ENCODE measurements at regions of chr3 and their contacts with region 1.

Region 1: DNA sequence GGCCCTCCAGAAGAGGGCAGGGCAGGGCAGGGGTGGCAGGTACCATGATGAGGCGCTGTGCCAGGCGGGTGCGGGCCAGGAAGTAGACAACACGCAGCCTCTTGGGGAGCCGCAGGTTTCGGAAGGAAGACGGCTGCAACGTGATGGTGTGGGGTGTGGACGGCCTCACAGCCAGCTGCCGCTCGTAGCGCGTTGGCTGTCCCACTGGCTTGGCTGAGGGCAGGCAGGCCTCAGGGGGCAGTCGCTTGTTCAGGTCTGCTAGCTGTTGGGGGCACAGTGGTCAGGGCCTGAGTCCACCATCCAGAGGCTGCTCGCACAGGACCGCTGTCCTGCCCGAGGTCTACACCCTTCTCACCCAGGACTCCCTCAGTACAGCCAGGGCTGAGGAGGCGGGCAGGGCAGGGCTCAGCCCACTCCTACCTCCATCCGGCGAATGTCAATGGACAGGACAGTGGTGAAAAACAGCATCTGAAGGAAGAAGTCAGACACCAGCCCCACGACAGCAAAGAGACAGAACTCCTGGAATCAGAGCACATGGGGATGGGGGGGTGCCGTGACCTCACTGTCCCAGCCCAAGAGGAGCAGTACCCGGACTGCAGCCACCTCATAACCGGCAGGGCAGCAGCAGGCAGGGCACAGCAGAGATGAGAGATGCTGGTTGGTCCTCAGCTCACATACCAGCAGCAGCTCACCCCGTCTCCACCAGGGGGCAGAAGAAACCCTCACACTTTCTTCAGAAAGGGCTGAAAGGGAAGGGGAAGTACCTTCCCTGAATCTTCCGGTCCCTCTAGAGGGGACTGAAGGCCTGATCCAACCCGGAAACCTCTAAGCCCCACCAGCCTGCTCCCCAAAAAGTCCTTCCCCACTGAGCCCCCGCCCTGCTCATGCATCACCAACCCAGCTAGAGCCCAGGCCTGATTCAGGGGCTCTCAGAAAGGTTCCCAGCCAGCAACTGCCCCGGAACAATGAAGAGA is 40.0 kb downstream of the PTPN23 start:
- DNase-seq: peak; percentile 84 to 91
- H3K4me3 ChIP-seq: no peak overlapping the region
- H3K4me3 Mint-ChIP-seq: no peak overlapping the region
- H3K27ac Mint-ChIP-seq: peak overlapping the region; percentile 45
- H3K4me1 ChIP-seq: peaks cover 8% of the 10 kb centered on the region
- H3K4me1 Mint-ChIP-seq: peaks cover 17% of the 10 kb centered on the region
- H3K27me3 ChIP-seq: no peaks in the 10 kb centered on the region
- H3K27me3 Mint-ChIP-seq: no peaks in the 10 kb centered on the region
- CTCF ChIP-seq: peak; percentile 87 to 96

Region 2: DNA sequence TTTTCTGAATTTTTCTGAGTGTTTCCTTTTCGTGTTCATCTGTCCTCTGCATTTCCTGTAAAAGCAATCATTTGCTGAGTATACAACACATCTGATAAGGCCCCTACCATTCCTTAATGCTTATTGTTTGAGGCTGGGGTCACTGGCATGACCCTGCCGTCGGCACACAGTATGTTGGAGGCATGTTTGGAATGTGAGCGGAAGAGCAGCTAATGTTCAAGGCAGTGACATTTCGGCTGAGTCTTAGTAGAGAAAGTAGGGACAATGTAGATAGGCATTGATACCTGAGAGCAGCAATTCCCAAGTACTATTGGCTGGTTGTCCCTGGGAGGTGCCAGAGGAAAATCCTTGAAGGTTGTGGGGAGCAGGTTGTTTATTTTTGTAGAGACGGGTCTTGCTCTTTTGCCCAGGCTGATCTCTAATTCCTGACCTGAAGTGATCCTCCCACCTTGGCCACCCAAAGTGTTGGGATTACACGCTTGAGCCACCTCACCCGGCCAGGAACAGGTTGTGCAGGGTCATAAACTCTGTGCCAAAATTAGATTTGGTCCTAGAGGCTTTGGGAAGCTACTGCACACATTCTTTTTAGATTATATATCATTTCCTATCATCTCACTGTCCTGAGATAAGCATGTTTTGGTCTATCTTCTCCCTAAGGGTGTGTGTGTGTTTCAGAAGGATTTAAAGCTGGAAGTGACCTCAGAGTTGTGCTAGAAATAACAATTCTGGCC is 26.5 kb before region 1 on chr3:
- CTCF ChIA-PET with region 1: interaction called, 13 read pairs
- POLR2A ChIA-PET with region 1: interaction called, 3 read pairs
- intact Hi-C with region 1: no loop called
- DNase-seq: peak; percentile 82 to 87
- H3K4me3 ChIP-seq: peak overlapping the region; percentile 5; the same call in 1 of the 2 replicates
- H3K4me3 Mint-ChIP-seq: peak overlapping the region; percentile 69
- H3K27ac Mint-ChIP-seq: peak overlapping the region; percentile 90
- H3K4me1 ChIP-seq: peaks cover 33% of the 10 kb centered on the region
- H3K4me1 Mint-ChIP-seq: peaks cover 17% of the 10 kb centered on the region
- H3K27me3 ChIP-seq: no peaks in the 10 kb centered on the region
- H3K27me3 Mint-ChIP-seq: no peaks in the 10 kb centered on the region
- CTCF ChIP-seq: peak in 1 of 2 experiments; percentile 42

Region 3: DNA sequence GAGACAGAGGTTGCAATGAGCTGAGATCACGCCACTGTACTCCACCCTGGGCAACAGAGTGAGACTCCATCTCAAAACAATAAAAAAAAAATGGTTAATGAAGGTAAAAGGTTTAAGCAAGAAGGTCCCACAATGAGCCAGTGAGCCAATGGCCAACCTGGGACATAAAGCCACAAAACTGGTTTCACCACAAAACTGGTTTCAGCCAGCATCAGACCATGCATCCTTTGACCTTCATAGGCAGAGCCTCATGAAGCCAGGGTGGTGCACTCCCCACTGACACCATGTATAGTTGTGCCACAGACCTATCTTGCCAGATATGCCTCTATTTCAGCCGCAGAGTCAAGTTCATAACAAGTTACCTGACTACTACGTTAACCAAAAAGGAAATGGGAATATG is 13.0 kb after region 1 on chr3:
- CTCF ChIA-PET with region 1: interaction called, 13 read pairs
- POLR2A ChIA-PET with region 1: no interaction called
- intact Hi-C with region 1: no loop called
- DNase-seq: peak in 1 of 2 experiments; percentile 54
- H3K4me3 ChIP-seq: no peak overlapping the region
- H3K4me3 Mint-ChIP-seq: peak overlapping the region; percentile 18
- H3K27ac Mint-ChIP-seq: peak overlapping the region; percentile 22
- H3K4me1 ChIP-seq: peaks cover 30% of the 10 kb centered on the region
- H3K4me1 Mint-ChIP-seq: peaks cover 32% of the 10 kb centered on the region
- H3K27me3 ChIP-seq: no peaks in the 10 kb centered on the region
- H3K27me3 Mint-ChIP-seq: no peaks in the 10 kb centered on the region
- CTCF ChIP-seq: no peak

Region 4: GRCh38 chr3:47443611-47443995 is 22.8 kb after region 1 on chr3:
- CTCF ChIA-PET with region 1: interaction called, 5 read pairs
- POLR2A ChIA-PET with region 1: no interaction called
- intact Hi-C with region 1: loop called (anchors 1 kb)
- DNase-seq: peak; percentile 72 to 79
- H3K4me3 ChIP-seq: 0 out of 2 replicates have a peak overlapping the region, but pooled peaks have one; percentile 5
- H3K4me3 Mint-ChIP-seq: peak overlapping the region; percentile 55
- H3K27ac Mint-ChIP-seq: peak overlapping the region; percentile 70
- H3K4me1 ChIP-seq: peaks cover 37% of the 10 kb centered on the region
- H3K4me1 Mint-ChIP-seq: peaks cover 32% of the 10 kb centered on the region
- H3K27me3 ChIP-seq: no peaks in the 10 kb centered on the region; the same call in 1 of the 2 replicates
- H3K27me3 Mint-ChIP-seq: no peaks in the 10 kb centered on the region
- CTCF ChIP-seq: no peak

Region 5: GRCh38 chr3:47475570-47476329 is 55.0 kb after region 1 on chr3 and contains the start of gene SCAP:
- CTCF ChIA-PET with region 1: interaction called, 42 read pairs
- POLR2A ChIA-PET with region 1: no interaction called
- intact Hi-C with region 1: loop called (anchors 1 kb)
- DNase-seq: peak; percentile 94 to 95
- H3K4me3 ChIP-seq: peak within 1 kb of the TSS; percentile 74
- H3K4me3 Mint-ChIP-seq: peak within 1 kb of the TSS; percentile 89
- H3K27ac Mint-ChIP-seq: peak within 1 kb of the TSS; percentile 82
- H3K4me1 ChIP-seq: peaks cover 12% of the 10 kb centered on the region
- H3K4me1 Mint-ChIP-seq: peaks cover 11% of the 10 kb centered on the region
- H3K27me3 ChIP-seq: no peaks in the 10 kb centered on the region
- H3K27me3 Mint-ChIP-seq: no peaks in the 10 kb centered on the region
- CTCF ChIP-seq: peak; percentile 80 to 84
- total RNA-seq, gene SCAP: 104 and 115 TPM in 2 replicates

Region 6: GRCh38 chr3:47513125-47513929 is 92.5 kb after region 1 on chr3 and contains the start of gene ELP6:
- CTCF ChIA-PET with region 1: interaction called, 5 read pairs
- POLR2A ChIA-PET with region 1: no interaction called
- intact Hi-C with region 1: loop called (anchors 1 kb)
- DNase-seq: peak; percentile 97
- H3K4me3 ChIP-seq: peak within 1 kb of the TSS; percentile 49
- H3K4me3 Mint-ChIP-seq: peak within 1 kb of the TSS; percentile 89
- H3K27ac Mint-ChIP-seq: peak within 1 kb of the TSS; percentile 94
- H3K4me1 ChIP-seq: no peaks in the 10 kb centered on the region
- H3K4me1 Mint-ChIP-seq: peaks cover 6% of the 10 kb centered on the region
- H3K27me3 ChIP-seq: no peaks in the 10 kb centered on the region
- H3K27me3 Mint-ChIP-seq: no peaks in the 10 kb centered on the region
- CTCF ChIP-seq: peak; percentile 41 to 74
- total RNA-seq, gene ELP6: 41.0 and 42.0 TPM in 2 replicates

Region 7: DNA sequence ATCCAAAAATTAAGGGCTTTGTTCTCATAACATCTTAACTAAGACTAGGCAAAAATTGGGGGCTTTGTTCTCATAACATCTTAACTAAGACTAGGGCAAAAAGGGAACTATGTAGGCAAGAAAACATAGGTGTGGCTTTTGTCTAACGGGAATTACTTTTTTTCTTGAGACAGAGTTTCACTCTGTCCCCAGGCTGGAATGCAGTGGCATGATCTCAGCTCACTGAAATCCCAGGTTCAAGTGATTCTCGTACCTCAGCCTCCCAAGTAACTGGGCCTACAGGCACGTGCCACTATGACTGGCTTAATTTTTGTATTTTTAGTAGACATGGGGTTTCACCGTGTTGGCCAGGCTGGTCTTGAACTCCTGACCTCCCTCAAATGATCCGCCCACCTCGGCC is 207.6 kb after region 1 on chr3:
- CTCF ChIA-PET with region 1: no interaction called
- POLR2A ChIA-PET with region 1: no interaction called
- intact Hi-C with region 1: no loop called
- DNase-seq: no peak
- H3K4me3 ChIP-seq: no peak overlapping the region
- H3K4me3 Mint-ChIP-seq: no peak overlapping the region
- H3K27ac Mint-ChIP-seq: no peak overlapping the region
- H3K4me1 ChIP-seq: no peaks in the 10 kb centered on the region
- H3K4me1 Mint-ChIP-seq: no peaks in the 10 kb centered on the region
- H3K27me3 ChIP-seq: no peaks in the 10 kb centered on the region
- H3K27me3 Mint-ChIP-seq: no peaks in the 10 kb centered on the region
- CTCF ChIP-seq: no peak

Region 8: GRCh38 chr3:47791193-47791855 is 370.5 kb after region 1 on chr3:
- CTCF ChIA-PET with region 1: no interaction called
- POLR2A ChIA-PET with region 1: no interaction called
- intact Hi-C with region 1: loop called (anchors 1 kb)
- DNase-seq: no peak
- H3K4me3 ChIP-seq: no peak overlapping the region
- H3K4me3 Mint-ChIP-seq: no peak overlapping the region
- H3K27ac Mint-ChIP-seq: no peak overlapping the region
- H3K4me1 ChIP-seq: no peaks in the 10 kb centered on the region
- H3K4me1 Mint-ChIP-seq: no peaks in the 10 kb centered on the region
- H3K27me3 ChIP-seq: no peaks in the 10 kb centered on the region
- H3K27me3 Mint-ChIP-seq: no peaks in the 10 kb centered on the region
- CTCF ChIP-seq: no peak

Measured in Caco-2 (cell line).